Activated CD4-positive, alpha-beta memory T cell treated with anti-CD3 and anti-CD28 coated beads, Interleukin-2, amount 10 ng/mL, durations not matched to agents 7 days and 5 days (primary cell): ENCODE measurements at regions of chr6 and their contacts with region 1.

Region 1: DNA sequence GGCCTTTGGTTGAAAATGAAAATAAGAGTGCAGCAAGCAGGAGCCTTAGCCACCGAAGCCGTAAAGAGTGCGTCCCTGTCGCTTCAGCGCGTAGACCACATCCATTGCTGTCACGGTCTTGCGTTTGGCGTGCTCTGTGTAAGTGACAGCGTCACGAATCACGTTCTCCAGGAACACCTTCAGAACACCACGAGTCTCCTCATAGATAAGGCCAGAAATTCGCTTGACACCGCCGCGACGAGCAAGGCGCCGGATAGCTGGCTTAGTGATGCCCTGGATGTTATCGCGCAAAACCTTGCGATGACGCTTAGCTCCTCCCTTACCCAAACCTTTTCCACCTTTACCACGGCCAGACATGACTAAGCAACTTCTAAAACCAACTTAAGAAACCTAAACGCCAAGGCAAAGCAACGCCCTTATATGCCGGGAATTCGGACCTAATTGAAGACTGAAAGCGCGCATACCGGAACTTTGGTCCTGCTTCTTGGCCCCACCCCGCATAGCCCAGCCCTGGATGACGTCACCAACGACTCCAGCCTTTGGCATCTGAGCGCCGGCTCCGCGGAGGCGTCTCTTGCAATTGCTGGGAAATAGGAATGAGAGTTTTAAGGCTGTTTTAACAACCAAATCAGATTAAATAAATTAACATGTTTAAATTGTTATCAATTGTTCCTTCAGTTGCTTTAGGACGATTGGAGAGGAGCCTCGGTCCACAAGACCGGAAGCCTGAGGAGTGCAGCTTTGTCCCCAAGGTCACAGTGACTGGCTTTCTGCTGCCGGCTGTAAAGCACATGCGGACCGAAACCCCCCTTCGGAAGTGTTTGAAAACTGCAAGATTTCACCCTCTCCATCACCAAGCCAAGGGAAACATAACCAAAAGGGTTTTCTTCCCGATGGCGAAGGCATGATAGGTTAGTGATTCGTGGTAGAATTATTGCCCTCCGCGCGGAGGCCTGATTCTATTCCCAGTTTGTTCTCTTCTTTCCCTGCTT is 79.6 kb upstream of the BTN3A2 start:
- DNase-seq: peak; percentile 98
- H3K4me3 Mint-ChIP-seq: peak overlapping the region; percentile 83
- H3K27ac Mint-ChIP-seq: peak overlapping the region; percentile 96
- H3K4me1 Mint-ChIP-seq: peaks cover 39% of the 10 kb centered on the region
- H3K27me3 Mint-ChIP-seq: peaks cover 4% of the 10 kb centered on the region

Region 2: DNA sequence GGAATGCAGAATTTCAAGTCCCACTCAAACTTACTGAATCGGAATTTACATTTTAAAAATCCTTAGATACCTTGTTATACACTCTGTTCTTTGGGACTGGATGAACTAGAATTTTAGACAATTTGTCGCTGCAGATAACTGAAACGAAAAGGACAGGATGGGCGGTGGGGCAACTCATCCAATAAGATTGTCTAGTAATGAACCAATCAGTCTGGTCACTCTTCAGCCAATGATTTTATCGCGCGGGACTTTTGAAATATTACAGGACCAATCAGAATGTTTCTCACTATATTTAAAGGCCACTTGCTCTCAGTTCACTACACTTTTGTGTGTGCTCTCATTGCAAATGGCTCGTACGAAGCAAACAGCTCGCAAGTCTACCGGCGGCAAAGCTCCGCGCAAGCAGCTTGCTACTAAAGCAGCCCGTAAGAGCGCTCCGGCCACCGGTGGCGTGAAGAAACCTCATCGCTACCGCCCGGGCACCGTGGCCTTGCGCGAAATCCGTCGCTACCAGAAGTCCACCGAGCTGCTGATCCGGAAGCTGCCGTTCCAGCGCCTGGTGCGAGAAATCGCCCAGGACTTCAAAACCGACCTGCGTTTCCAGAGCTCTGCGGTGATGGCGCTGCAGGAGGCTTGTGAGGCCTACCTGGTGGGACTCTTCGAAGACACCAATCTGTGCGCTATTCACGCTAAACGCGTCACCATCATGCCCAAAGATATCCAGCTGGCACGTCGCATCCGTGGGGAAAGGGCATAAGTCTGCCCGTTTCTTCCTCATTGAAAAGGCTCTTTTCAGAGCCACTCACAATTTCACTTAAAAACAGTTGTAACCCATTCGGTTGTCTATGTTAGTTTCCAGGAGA is 240.1 kb before region 1 on chr6:
- CTCF ChIA-PET with region 1: no interaction called
- POLR2A ChIA-PET with region 1: interaction called, 13 read pairs
- DNase-seq: peak; percentile 82
- H3K4me3 Mint-ChIP-seq: peak overlapping the region; percentile 79
- H3K27ac Mint-ChIP-seq: peak overlapping the region; percentile 99
- H3K4me1 Mint-ChIP-seq: peaks cover 44% of the 10 kb centered on the region
- H3K27me3 Mint-ChIP-seq: no peaks in the 10 kb centered on the region

Region 3: GRCh38 chr6:26204332-26205165 is 80.9 kb before region 1 on chr6:
- CTCF ChIA-PET with region 1: interaction called, 9 read pairs
- POLR2A ChIA-PET with region 1: interaction called, 124 read pairs
- DNase-seq: peak; percentile 90
- H3K4me3 Mint-ChIP-seq: no peak overlapping the region
- H3K27ac Mint-ChIP-seq: no peak overlapping the region
- H3K4me1 Mint-ChIP-seq: peaks cover 35% of the 10 kb centered on the region
- H3K27me3 Mint-ChIP-seq: no peaks in the 10 kb centered on the region

Region 4: GRCh38 chr6:26240154-26241032 is 45.0 kb before region 1 on chr6:
- CTCF ChIA-PET with region 1: no interaction called
- POLR2A ChIA-PET with region 1: interaction called, 124 read pairs
- DNase-seq: peak; percentile 87
- H3K4me3 Mint-ChIP-seq: peak overlapping the region; percentile 71
- H3K27ac Mint-ChIP-seq: peak overlapping the region; percentile 94
- H3K4me1 Mint-ChIP-seq: peaks cover 42% of the 10 kb centered on the region
- H3K27me3 Mint-ChIP-seq: no peaks in the 10 kb centered on the region

Region 5: DNA sequence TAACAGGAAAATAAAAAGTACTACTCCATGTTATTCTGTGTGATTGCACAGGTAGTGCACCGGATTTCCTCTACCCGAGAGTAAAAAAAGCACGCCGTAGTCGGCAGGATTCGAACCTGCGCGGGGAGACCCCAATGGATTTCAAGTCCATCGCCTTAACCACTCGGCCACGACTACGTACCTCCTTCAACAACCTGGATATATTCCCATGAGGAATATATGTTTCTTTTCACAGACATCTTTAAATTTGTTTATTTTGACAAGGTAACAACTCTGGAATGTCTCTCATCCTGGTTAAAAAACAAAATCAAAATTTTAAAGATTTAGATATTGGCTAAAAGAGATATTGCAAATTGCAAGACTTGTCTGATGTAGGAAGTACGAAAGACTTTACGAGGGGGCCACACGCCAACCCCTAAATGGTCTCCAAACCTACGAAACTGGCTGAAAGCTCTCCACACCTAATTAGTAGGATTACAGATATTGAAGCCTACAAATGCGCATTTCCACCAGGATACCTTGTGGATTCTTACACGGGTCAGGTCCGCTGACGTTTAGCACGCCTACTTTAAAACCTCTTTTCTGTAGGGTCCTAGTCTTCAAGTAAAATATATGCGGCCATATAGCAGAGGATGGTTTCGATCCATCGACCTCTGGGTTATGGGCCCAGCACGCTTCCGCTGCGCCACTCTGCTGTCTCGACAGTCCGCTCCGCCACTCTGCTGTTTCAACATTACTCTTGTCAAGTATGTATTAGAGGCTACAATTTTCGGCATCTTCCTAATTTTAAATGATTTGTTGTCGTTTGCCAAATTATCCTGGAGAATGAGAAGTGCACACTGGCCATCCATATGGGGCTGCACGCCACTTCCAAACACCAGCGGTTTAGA is 27.3 kb after region 1 on chr6:
- CTCF ChIA-PET with region 1: interaction called, 8 read pairs
- POLR2A ChIA-PET with region 1: interaction called, 25 read pairs
- DNase-seq: peak; percentile 81
- H3K4me3 Mint-ChIP-seq: peak overlapping the region; percentile 83
- H3K27ac Mint-ChIP-seq: peak overlapping the region; percentile 82
- H3K4me1 Mint-ChIP-seq: peaks cover 53% of the 10 kb centered on the region
- H3K27me3 Mint-ChIP-seq: no peaks in the 10 kb centered on the region

Region 6: GRCh38 chr6:26545627-26546026 is 260.2 kb after region 1 on chr6:
- CTCF ChIA-PET with region 1: no interaction called
- POLR2A ChIA-PET with region 1: no interaction called
- DNase-seq: no peak
- H3K4me3 Mint-ChIP-seq: no peak overlapping the region
- H3K27ac Mint-ChIP-seq: no peak overlapping the region
- H3K4me1 Mint-ChIP-seq: peaks cover 41% of the 10 kb centered on the region
- H3K27me3 Mint-ChIP-seq: no peaks in the 10 kb centered on the region

Region 7: DNA sequence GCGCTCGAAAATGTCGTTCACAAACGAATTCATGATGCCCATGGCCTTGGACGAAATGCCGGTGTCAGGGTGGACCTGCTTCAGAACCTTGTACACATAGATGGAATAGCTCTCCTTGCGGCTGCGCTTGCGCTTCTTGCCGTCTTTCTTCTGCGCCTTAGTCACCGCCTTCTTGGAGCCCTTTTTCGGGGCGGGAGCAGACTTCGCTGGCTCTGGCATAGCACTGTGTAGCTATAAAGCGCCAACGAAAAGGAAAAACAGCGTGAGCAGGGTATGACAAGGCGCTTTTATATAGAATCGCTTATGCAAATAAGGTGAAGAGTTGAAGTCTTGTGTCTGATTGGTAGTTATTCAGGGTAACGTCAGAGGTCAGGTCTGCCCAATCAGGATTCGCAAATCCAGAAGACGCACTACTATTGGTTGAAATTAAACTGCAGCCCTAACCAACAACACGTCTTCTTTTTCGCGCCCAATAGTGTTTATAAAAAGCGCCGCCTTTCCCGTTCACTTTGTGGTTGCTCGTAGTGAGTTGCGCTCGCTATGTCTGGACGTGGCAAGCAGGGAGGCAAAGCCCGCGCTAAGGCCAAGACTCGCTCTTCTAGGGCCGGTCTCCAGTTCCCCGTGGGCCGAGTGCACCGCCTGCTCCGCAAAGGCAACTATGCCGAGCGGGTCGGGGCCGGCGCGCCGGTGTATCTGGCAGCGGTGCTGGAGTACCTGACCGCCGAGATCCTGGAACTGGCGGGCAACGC is 847.3 kb after region 1 on chr6:
- CTCF ChIA-PET with region 1: interaction called, 4 read pairs
- POLR2A ChIA-PET with region 1: interaction called, 49 read pairs
- DNase-seq: peak; percentile 95
- H3K4me3 Mint-ChIP-seq: no peak overlapping the region
- H3K27ac Mint-ChIP-seq: no peak overlapping the region
- H3K4me1 Mint-ChIP-seq: peaks cover 60% of the 10 kb centered on the region
- H3K27me3 Mint-ChIP-seq: no peaks in the 10 kb centered on the region